ENCODE measurements at regions of chr1 and their contacts with region 1.

Region 1: GRCh38 chr1:199041173-199041914 is 402.5 kb downstream of the PTPRC start:
- DNase-seq: peak; percentile 94
- ATAC-seq: peak; percentile 96
- H3K4me3 ChIP-seq: no peak overlapping the region
- H3K27ac ChIP-seq: no peak overlapping the region
- H3K4me1 ChIP-seq: peaks cover 5% of the 10 kb centered on the region; the same call in 1 of the 2 replicates
- H3K27me3 ChIP-seq: no peaks in the 10 kb centered on the region
- CTCF ChIP-seq: no peak
- EP300 ChIP-seq: peak; percentile 85 to 93
- POLR2A ChIP-seq: no peak
- RAD21 ChIP-seq: no peak

Region 2: DNA sequence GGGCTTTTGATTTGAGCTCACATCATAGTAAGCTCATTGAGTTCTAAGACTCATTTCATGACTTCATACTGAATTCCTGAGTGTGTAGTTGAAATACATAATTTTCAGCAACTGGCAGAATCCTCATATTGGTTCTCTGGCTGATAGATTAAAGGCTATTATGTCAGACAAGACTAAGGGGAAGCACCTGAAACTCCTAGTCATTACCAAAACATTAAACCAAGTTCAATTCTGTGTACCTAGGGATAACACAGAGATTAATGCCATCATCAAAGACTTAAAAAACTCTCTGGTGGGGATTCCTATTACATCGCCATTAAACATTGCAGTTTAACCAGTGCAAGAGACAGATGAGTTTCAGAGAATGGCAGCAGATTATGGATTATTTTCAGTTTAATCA is 63.4 kb before region 1 on chr1:
- CTCF ChIA-PET with region 1: no interaction called
- POLR2A ChIA-PET with region 1: no interaction called
- RAD21 ChIA-PET with region 1: no interaction called
- SMC1A ChIA-PET with region 1: interaction called, 4 read pairs
- in situ Hi-C with region 1: no loop called
- intact Hi-C with region 1: loop called (anchors 5 kb)
- DNase-seq: no peak
- ATAC-seq: peak; percentile 84
- H3K4me3 ChIP-seq: no peak overlapping the region
- H3K27ac ChIP-seq: no peak overlapping the region
- H3K4me1 ChIP-seq: no peaks in the 10 kb centered on the region
- H3K27me3 ChIP-seq: no peaks in the 10 kb centered on the region
- CTCF ChIP-seq: no peak
- EP300 ChIP-seq: no peak
- POLR2A ChIP-seq: no peak
- RAD21 ChIP-seq: no peak

Region 3: DNA sequence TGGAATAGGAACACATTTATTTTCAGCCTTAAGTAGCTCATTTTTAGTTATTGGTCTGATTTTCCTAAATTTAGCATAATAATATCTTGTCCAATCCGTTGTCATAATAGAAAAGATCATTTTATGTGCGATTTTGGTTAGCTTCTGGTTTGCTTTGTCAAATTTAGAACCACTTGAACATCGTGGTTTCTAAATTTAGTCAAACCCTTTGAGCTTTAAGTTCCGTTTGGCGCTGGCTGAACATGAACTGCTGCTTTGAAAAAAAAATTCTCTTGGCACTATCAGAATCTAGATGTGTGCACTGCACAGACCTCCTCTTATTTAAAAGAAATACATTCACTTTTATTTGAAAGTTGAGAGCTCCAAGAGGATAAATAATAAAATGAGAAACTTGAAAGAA is 31.9 kb before region 1 on chr1:
- CTCF ChIA-PET with region 1: interaction called, 3 read pairs
- POLR2A ChIA-PET with region 1: interaction called, 3 read pairs
- RAD21 ChIA-PET with region 1: interaction called, 6 read pairs
- SMC1A ChIA-PET with region 1: interaction called, 12 read pairs
- in situ Hi-C with region 1: no loop called
- intact Hi-C with region 1: no loop called
- DNase-seq: peak; percentile 48
- ATAC-seq: peak; percentile 83
- H3K4me3 ChIP-seq: peak overlapping the region; percentile 13; the same call in 1 of the 2 replicates
- H3K27ac ChIP-seq: peak overlapping the region; percentile 8; the same call in 1 of the 2 replicates
- H3K4me1 ChIP-seq: peaks cover 11% of the 10 kb centered on the region
- H3K27me3 ChIP-seq: no peaks in the 10 kb centered on the region
- CTCF ChIP-seq: no peak
- EP300 ChIP-seq: peak; percentile 34 to 41; a peak in 1 of 4 replicates
- POLR2A ChIP-seq: no peak
- RAD21 ChIP-seq: peak; percentile 26; the same call in 1 of the 2 replicates

Region 4: GRCh38 chr1:199067483-199067882 is 26.1 kb after region 1 on chr1:
- CTCF ChIA-PET with region 1: interaction called, 5 read pairs
- POLR2A ChIA-PET with region 1: interaction called, 3 read pairs
- RAD21 ChIA-PET with region 1: interaction called, 19 read pairs
- SMC1A ChIA-PET with region 1: interaction called, 31 read pairs
- in situ Hi-C with region 1: no loop called
- intact Hi-C with region 1: no loop called
- DNase-seq: no peak
- ATAC-seq: peak; percentile 90
- H3K4me3 ChIP-seq: 0 out of 2 replicates have a peak overlapping the region, but pooled peaks have one; percentile 11
- H3K27ac ChIP-seq: peak overlapping the region; percentile 61; the same call in 1 of the 2 replicates
- H3K4me1 ChIP-seq: peaks cover 7% of the 10 kb centered on the region; the same call in 1 of the 2 replicates
- H3K27me3 ChIP-seq: no peaks in the 10 kb centered on the region
- CTCF ChIP-seq: no peak
- EP300 ChIP-seq: peak in 1 of 2 experiments; percentile 60; a peak in 1 of 4 replicates
- POLR2A ChIP-seq: no peak
- RAD21 ChIP-seq: no peak

Region 5: GRCh38 chr1:199089393-199090122 is 48.2 kb after region 1 on chr1:
- CTCF ChIA-PET with region 1: no interaction called
- POLR2A ChIA-PET with region 1: interaction called, 3 read pairs
- RAD21 ChIA-PET with region 1: interaction called, 3 read pairs
- SMC1A ChIA-PET with region 1: interaction called, 20 read pairs
- in situ Hi-C with region 1: no loop called
- intact Hi-C with region 1: no loop called
- DNase-seq: peak; percentile 60
- ATAC-seq: peak; percentile 97
- H3K4me3 ChIP-seq: no peak overlapping the region
- H3K27ac ChIP-seq: peak overlapping the region; percentile 59
- H3K4me1 ChIP-seq: peaks cover 6% of the 10 kb centered on the region
- H3K27me3 ChIP-seq: no peaks in the 10 kb centered on the region
- CTCF ChIP-seq: no peak
- EP300 ChIP-seq: peak; percentile 40 to 76
- POLR2A ChIP-seq: no peak
- RAD21 ChIP-seq: no peak

Measured in GM12878 (cell line).